Esophagus muscularis mucosa (tissue), 4 donors: ENCODE measurements at regions of chr2 and their contacts with region 1.

Region 1: GRCh38 chr2:88159955-88160415 is 10.2 kb upstream of the THNSL2 start:
- DNase-seq: no peak
- H3K4me3 ChIP-seq: no peak overlapping the region
- H3K27ac ChIP-seq: no peak overlapping the region
- H3K4me1 ChIP-seq: peaks cover under 1 to 6% (median 5%) of the 10 kb centered on the region in 4 donors
- H3K27me3 ChIP-seq: no peaks in the 10 kb centered on the region
- CTCF ChIP-seq: peak; percentile 81 to 88 (median 85)
- EP300 ChIP-seq: no peak
- POLR2A ChIP-seq: no peak

Region 2: GRCh38 chr2:88059979-88060906 is 99.7 kb before region 1 on chr2:
- intact Hi-C with region 1: loop called (anchors 1 kb)
- DNase-seq: no peak
- H3K4me3 ChIP-seq: no peak overlapping the region
- H3K27ac ChIP-seq: no peak overlapping the region
- H3K4me1 ChIP-seq: peaks cover 0 to 8% (median 6%) of the 10 kb centered on the region in 4 donors
- H3K27me3 ChIP-seq: no peaks in the 10 kb centered on the region
- CTCF ChIP-seq: peak; percentile 69 to 84 (median 74)
- EP300 ChIP-seq: no peak
- POLR2A ChIP-seq: no peak